Activated CD4-positive, alpha-beta T cell treated with anti-CD3 and anti-CD28 coated beads for 36 hours (primary cell): ENCODE measurements at regions of chr19 and their contacts with region 1.

Region 1: DNA sequence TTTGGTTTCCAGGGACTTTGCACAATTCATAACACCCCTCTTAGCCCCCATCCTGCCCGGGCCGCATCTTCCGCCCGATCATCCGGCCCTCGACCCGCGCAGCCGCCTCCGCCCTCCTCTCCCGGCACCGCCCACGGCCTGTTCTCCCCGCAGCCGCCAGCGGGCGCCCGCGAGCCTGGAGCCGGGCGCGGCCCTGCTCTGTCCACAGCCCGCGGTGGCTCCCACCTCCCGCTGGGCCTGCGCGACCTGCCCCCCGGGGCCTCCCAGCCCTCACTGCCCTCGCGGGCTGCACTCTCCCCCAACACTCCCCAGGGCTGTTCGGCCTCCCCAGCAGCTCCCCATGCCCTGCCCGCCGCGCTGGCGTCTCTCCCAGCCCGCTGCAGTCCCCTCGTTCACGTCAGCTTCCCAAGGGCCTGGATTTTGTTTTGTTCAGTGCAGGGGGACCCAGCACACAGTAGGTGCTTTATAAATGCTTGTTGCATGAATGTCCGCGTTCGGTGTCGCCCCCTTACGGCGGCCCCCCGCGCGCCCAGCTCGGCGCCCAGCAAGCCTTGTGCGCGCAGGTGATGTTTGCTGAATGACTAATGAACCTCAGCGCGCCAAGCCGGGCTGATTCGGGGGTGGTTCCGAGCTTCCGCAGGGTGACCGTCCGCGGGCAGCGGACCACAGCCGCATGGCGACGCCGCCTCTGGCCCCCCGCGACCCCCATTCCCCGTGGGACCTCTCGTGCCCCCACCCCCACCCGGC is 4.6 kb upstream of the APC2 start:
- DNase-seq: peak; percentile 89
- ATAC-seq: peak; percentile 82
- H3K4me3 Mint-ChIP-seq: peak overlapping the region; percentile 49
- H3K27ac Mint-ChIP-seq: no peak overlapping the region
- H3K4me1 Mint-ChIP-seq: peaks cover 30% of the 10 kb centered on the region
- H3K27me3 Mint-ChIP-seq: peaks cover 22% of the 10 kb centered on the region

Region 2: GRCh38 chr19:1455336-1456120 is 10.2 kb after region 1 on chr19:
- CTCF ChIA-PET with region 1: interaction called, 10 read pairs
- POLR2A ChIA-PET with region 1: interaction called, 5 read pairs
- intact Hi-C with region 1: no loop called
- DNase-seq: peak; percentile 85
- ATAC-seq: peak; percentile 82
- H3K4me3 Mint-ChIP-seq: peak overlapping the region; percentile 14
- H3K27ac Mint-ChIP-seq: no peak overlapping the region
- H3K4me1 Mint-ChIP-seq: peaks cover 15% of the 10 kb centered on the region
- H3K27me3 Mint-ChIP-seq: peaks cover 41% of the 10 kb centered on the region

Region 3: GRCh38 chr19:1465191-1466016 is 20.0 kb after region 1 on chr19:
- CTCF ChIA-PET with region 1: interaction called, 17 read pairs
- POLR2A ChIA-PET with region 1: no interaction called
- intact Hi-C with region 1: no loop called
- DNase-seq: peak; percentile 63
- ATAC-seq: no peak
- H3K4me3 Mint-ChIP-seq: no peak overlapping the region
- H3K27ac Mint-ChIP-seq: no peak overlapping the region
- H3K4me1 Mint-ChIP-seq: peaks cover 3% of the 10 kb centered on the region
- H3K27me3 Mint-ChIP-seq: peaks cover 3% of the 10 kb centered on the region

Region 4: DNA sequence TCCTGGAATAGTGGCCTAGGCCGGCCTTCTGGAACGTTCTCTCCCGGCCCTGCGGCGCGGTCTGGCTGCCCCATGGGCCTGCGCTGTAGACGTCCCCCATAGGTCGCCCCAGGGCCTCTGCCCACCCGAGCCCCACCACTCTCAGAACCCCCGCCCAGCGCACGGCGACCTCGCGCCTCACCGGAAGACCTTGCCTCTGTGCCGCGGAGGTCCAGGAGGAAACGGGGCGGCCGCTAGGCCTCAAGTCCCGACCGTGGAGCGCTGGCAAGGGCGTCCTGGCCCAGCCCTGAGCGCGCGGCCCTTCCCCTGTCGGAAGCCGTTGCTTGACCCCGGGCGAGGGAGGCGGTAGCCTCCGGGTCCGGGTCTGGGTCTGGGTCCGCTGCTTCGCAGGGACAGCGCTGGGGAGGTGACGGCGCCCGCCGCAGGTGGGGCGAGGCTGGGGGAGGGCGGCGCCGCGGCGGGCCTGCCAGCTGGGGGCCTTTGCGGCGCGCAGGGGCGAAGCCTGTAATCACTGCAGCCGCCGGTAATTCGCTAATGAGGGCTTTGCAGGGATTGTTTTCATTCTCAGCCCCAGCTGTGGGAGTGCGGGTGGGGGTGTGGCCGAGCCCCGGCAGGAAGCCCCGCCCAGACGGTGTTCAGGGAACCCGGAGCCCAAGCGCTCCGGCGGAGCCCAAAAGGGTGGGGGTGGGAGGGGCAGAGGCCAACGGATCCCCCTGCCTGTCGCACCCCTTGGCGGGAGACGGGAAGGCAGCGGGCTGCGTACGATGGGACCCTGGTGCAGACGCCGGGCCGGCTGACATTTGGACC is 25.0 kb after region 1 on chr19:
- CTCF ChIA-PET with region 1: interaction called, 17 read pairs
- POLR2A ChIA-PET with region 1: no interaction called
- intact Hi-C with region 1: loop called (anchors 1 to 5 kb)
- DNase-seq: peak; percentile 83
- ATAC-seq: peak; percentile 67
- H3K4me3 Mint-ChIP-seq: peak overlapping the region; percentile 54
- H3K27ac Mint-ChIP-seq: no peak overlapping the region
- H3K4me1 Mint-ChIP-seq: peaks cover 5% of the 10 kb centered on the region
- H3K27me3 Mint-ChIP-seq: peaks cover 3% of the 10 kb centered on the region

Region 5: GRCh38 chr19:1513499-1514294 is 68.3 kb after region 1 on chr19:
- CTCF ChIA-PET with region 1: no interaction called
- POLR2A ChIA-PET with region 1: no interaction called
- intact Hi-C with region 1: loop called in 1 of 2 experiments (anchors 1 kb)
- DNase-seq: peak; percentile 88
- ATAC-seq: peak; percentile 60
- H3K4me3 Mint-ChIP-seq: no peak overlapping the region
- H3K27ac Mint-ChIP-seq: no peak overlapping the region
- H3K4me1 Mint-ChIP-seq: peaks cover 7% of the 10 kb centered on the region
- H3K27me3 Mint-ChIP-seq: no peaks in the 10 kb centered on the region